ENCODE measurements at regions of chr3 and their contacts with region 1.

Region 1: GRCh38 chr3:4633078-4634004 is 140.2 kb downstream of the ITPR1 start:
- DNase-seq: no peak
- ATAC-seq: peak; percentile 76
- H3K4me3 Mint-ChIP-seq: no peak overlapping the region
- H3K27ac Mint-ChIP-seq: peak overlapping the region; percentile 55
- H3K4me1 Mint-ChIP-seq: peaks cover 7% of the 10 kb centered on the region
- H3K27me3 Mint-ChIP-seq: no peaks in the 10 kb centered on the region

Region 2: GRCh38 chr3:4615750-4616149 is 17.6 kb before region 1 on chr3:
- CTCF ChIA-PET with region 1: interaction called, 10 read pairs
- DNase-seq: no peak
- ATAC-seq: no peak
- H3K4me3 Mint-ChIP-seq: no peak overlapping the region
- H3K27ac Mint-ChIP-seq: no peak overlapping the region
- H3K4me1 Mint-ChIP-seq: no peaks in the 10 kb centered on the region
- H3K27me3 Mint-ChIP-seq: no peaks in the 10 kb centered on the region

Region 3: DNA sequence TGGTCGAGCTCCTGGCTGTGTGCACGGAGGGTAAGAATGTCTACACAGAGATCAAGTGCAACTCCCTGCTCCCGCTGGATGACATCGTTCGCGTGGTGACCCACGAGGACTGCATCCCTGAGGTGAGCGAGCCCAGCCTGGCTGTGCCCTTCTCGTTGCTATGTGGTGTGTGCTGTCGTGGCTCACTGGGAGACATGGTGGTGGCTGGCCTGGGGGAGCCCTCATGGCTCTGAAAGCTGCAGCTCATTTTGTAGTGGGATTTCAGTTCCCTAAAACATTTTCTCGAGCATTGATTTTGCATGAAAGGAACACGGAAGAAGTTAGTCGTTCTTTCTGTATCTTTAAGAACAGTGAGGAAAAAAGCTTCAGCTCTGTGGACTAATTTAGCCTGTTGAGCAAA is 60.3 kb after region 1 on chr3:
- CTCF ChIA-PET with region 1: no interaction called
- DNase-seq: no peak
- ATAC-seq: no peak
- H3K4me3 Mint-ChIP-seq: no peak overlapping the region
- H3K27ac Mint-ChIP-seq: no peak overlapping the region
- H3K4me1 Mint-ChIP-seq: peaks cover 7% of the 10 kb centered on the region
- H3K27me3 Mint-ChIP-seq: no peaks in the 10 kb centered on the region

Measured in activated CD8-positive, alpha-beta memory T cell treated with anti-CD3 and anti-CD28 coated beads, Interleukin-2, amount 10 ng/mL, durations not matched to agents 7 days and 5 days (primary cell).